Calu3 (cell line): ENCODE measurements at regions of chr9 and their contacts with region 1.

Region 1: DNA sequence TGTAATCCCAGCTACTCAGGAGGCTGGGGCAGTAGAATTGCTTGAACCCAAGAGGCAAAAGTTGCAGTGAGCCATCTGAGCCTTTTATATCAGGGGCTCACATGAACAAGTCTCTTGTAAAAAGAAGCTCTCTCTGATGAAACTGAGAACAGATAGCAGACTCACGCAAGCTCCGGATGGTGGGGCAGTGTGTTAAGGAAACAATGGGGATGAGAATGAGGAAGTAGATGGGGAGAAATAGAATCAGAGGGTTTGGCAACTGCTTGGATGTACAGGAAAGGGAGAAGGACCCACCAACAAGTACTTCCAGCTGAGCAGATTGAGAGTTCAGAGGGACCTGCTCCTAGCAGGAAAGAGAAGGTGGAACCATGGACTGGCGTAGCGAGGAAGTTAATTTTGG is 18.6 kb downstream of the TMEM252 start:
- DNase-seq: no peak
- H3K4me3 Mint-ChIP-seq: no peak overlapping the region
- H3K27ac Mint-ChIP-seq: peak overlapping the region; percentile 72
- H3K4me1 Mint-ChIP-seq: peaks cover 26% of the 10 kb centered on the region
- H3K27me3 Mint-ChIP-seq: no peaks in the 10 kb centered on the region
- CTCF ChIP-seq: no peak

Region 2: DNA sequence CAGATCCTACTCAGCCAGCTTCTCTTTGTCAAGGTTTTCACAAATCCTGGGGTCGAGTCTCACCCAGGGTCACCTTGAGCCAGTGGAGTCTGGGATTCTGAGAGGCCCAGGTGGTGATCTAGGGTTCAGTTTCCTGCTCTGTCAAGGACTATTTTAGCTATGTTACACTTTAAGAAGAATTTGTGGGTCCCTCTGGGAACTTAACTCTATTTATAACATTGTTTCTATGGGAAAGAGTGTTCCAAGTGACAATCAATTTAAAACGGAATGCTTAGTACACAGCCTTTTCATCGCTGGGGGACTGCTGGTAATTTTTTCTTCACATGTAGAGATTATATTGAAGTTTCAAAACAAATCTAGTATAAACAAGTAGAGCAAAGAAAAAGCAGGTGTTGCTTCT is 45.4 kb after region 1 on chr9:
- CTCF ChIA-PET with region 1: no interaction called
- intact Hi-C with region 1: loop called (anchors 5 kb)
- DNase-seq: no peak
- H3K4me3 Mint-ChIP-seq: no peak overlapping the region
- H3K27ac Mint-ChIP-seq: no peak overlapping the region
- H3K4me1 Mint-ChIP-seq: no peaks in the 10 kb centered on the region
- H3K27me3 Mint-ChIP-seq: peaks cover 27% of the 10 kb centered on the region
- CTCF ChIP-seq: no peak